Left cardiac atrium (tissue), 4 donors: ENCODE measurements at regions of chr4 and their contacts with region 1.

Region 1: DNA sequence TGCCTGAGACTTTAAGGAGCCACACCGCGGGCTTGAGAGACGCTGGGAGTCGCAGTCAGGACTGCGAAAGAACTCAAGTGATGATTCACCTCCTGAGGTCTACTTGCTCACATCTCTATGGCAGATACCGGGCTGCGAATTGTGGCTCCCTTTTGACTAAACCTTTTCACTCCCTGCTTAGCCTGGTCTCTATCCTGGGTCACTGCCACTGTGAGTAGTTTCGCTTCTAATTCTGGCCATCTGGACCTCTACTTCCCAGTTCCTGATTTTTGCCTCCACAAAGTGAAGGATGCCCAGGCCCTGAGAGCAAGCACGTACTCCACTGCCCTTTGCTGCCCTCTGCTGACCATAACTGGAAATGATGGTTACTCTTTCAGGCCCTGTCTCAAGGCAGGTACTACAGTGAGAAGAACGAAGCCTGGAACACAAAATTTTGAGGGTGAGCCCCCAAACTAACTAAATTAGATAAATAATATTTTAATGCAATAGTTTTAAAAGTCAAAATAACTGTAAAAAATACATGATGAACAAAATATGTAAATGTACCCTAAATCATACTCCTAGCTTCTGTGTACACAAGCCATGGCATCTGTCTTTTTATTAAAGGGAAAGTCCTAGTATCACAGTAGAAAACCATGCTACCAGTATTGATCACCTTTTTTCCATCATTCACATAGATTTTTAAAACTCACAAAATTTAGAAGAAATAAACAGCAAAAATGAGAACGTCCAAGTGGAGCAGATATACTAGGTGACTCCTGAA is 16.7 kb downstream of the MAD2L1 start:
- DNase-seq: peak; percentile 69
- ATAC-seq: peak; percentile 87 to 94

Region 2: GRCh38 chr4:119314356-119314755 is 735.6 kb before region 1 on chr4:
- intact Hi-C with region 1: loop called in 1 of 2 experiments (anchors 10 kb)
- DNase-seq: no peak
- ATAC-seq: peak; percentile 75 to 83

Region 3: DNA sequence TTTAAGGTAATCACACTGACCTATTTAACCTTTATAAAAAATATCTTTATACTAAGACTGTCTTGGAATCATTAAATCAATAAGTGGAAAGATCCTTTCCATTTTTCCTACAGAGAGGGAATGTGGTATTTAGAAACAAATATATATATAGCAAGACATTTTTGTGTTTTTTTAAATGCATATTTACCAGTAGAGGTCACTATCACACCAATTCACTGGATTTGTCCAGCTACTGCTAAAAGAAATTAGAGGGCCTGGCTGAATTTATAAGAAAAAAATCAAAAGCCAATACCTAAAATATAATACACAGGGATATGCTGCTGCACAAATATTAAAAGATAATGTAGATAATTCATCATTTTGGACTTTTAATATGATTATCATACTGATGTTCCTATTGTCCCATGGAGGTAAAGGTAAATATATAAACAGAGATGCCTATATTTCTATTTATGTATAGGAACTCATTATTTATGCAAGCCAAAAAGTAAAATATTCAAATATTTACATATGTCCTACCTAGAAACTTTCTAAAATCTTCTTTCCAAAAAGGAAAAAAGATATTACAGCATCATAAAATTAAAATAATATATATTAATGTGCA is 490.8 kb before region 1 on chr4:
- intact Hi-C with region 1: loop called in 1 of 2 experiments (anchors 5 kb)
- DNase-seq: no peak
- ATAC-seq: no peak

Region 4: DNA sequence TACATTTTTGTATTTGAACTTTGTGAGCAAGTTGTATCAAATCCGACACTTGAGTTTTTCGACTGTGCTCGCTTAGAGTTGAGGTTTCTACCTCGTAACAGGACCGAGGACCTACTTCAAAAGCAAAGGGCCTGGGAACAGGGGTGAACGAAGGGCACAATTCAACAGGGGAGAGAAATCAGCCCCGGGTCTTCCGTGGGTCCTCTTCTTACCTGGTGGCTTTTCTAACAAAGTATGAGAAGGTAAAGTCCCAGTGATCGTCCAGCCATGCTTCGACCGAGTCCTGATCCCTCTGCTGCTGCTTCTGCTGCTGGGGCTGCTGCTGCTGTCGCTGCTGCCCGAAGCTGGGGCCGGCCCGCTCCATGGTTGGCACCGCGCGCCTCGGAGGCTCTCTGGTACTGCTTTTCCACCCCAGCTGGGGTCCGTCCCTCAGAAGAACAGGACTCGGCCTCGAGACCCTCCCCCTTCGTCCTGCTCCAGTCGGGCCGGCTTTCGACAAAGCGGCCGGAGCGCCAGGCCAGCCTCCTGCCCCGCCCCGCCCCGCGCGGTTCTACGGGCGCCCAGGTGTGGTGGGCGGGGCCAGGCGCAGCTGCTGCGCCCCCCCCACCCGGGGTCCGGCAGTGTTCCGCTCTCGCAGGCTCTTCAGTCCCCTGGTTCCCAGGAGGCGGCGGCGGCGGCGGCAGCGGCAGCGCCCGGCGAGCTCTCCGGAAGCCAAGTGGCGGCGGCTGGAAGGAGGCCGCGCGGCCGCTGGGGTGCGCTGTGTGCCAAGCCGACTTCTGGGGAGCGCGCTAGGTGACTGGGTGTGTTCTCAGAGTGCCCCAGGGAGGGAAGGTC is 421.4 kb before region 1 on chr4 and contains the start of gene PDE5A:
- intact Hi-C with region 1: loop called in 1 of 2 experiments (anchors 2 kb)
- DNase-seq: peak; percentile 79
- ATAC-seq: peak; percentile 85 to 91
- total RNA-seq, gene PDE5A: 7.6 to 8.9 TPM

Region 5: GRCh38 chr4:119692001-119692400 is 357.9 kb before region 1 on chr4:
- intact Hi-C with region 1: loop called in 1 of 2 experiments (anchors 1 kb)
- DNase-seq: no peak
- ATAC-seq: peak; percentile 60 to 82

Region 6: GRCh38 chr4:119794704-119795103 is 255.2 kb before region 1 on chr4:
- intact Hi-C with region 1: loop called in 1 of 2 experiments (anchors 5 kb)
- DNase-seq: no peak
- ATAC-seq: no peak

Region 7: GRCh38 chr4:120517966-120518365 is 468.1 kb after region 1 on chr4:
- intact Hi-C with region 1: no loop called
- DNase-seq: peak; percentile 25
- ATAC-seq: peak; percentile 86 to 90

Region 8: DNA sequence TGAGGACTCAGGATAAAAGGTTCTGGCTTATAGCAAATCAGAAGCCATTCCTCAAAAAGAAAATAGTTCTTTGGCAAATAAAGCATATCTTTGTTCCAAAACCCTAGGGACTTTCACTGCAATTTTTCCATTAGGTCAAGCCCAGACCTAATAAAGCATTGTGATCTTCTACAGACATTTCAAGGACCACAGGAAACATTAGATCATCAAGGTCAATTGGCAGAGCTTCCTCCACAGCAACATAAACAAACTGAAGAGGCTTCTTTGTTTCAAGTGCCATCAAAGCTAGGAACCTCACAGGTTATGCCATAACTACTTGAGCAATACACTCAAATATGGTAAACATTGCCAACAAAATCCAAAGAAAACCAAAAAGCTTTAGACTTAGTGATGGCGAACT is 1502.0 kb after region 1 on chr4:
- intact Hi-C with region 1: no loop called
- DNase-seq: no peak
- ATAC-seq: peak in 1 of 2 donors; percentile 61